ENCODE measurements at regions of chr10 and their contacts with region 1.

Region 1: DNA sequence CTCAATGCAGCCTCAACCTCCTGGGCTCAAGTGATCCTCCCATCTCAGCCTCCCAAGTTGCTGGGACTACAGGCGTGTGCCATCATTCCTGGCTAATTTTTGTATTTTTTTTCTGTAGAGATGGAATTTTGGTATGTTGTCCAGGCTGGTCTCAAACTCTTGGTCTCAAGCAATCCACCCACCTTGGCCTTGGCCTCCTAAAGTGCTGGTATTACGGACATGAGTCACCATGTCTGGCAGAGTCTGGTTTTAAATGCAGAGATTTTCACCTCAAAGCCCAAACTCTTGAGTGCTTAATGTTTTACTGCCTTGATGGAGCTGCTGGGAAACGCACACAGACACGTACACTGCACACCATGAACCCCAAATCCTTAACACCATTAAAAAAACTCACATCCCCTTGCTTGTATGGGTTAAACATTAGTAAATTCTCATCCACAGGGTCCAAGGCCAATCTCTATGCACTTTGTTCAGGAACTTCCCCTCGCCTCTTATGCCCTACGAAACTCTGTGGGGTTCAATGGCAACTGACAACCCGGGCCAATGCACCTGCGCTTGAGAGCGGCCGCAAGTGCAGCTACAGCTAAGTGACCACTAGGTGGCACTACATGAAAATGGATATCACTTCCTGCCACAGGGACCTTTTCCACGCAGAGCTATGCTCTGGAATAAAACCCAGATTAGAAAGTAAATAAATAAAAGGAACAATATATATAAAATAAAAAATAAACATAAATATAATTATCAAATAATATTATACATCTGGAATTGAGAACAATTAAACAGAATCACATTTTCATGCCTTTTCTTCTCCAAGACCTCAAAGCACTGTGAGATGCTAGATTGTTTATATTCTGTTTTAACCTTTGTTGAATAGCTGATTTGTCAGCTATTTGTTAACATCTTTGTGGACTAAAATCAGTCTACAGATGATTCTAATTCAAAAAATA is 66.9 kb upstream of the AFAP1L2 start:
- DNase-seq: peak; percentile 70
- H3K4me3 Mint-ChIP-seq: no peak overlapping the region
- H3K27ac Mint-ChIP-seq: peak overlapping the region; percentile 31
- H3K4me1 Mint-ChIP-seq: peaks cover 27% of the 10 kb centered on the region
- H3K27me3 Mint-ChIP-seq: no peaks in the 10 kb centered on the region

Region 2: DNA sequence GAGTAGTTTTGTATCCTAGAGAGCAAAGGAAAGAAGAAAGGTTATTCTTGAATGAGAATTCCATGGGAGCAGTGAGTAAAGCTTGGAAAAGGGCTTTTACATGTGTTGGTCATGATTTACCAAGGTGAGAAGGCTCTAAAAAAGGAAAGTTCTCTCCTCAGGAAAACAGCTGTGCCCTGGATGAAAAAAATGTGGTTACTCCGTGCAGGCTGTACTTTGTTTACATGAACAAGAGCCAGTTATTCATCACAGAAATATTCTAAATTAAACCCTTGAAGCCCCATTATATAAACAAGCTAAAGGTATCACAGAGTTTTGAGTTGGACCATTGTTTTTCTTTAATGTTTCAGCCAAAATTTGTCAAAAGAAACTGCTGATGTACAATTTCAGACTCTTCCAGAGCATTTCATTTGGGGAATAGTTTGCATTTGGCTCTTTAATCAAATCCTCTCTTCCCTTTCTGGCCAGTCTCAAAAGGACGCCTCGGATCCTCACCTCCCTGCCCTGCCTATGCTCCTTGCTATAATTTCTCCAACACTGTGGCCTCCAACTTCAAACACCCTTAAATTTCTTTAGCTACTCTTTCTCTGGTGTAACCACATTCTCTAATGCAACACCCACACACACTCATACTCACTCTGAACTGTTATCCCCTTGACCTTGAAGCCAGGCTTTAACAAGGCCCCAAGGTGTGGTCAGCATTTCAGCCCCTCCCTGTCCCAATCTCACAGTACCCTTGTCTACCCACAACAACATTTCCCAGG is 114.3 kb before region 1 on chr10:
- CTCF ChIA-PET with region 1: no interaction called
- POLR2A ChIA-PET with region 1: no interaction called
- DNase-seq: no peak
- H3K4me3 Mint-ChIP-seq: no peak overlapping the region
- H3K27ac Mint-ChIP-seq: no peak overlapping the region
- H3K4me1 Mint-ChIP-seq: no peaks in the 10 kb centered on the region
- H3K27me3 Mint-ChIP-seq: peaks cover 22% of the 10 kb centered on the region

Region 3: GRCh38 chr10:114437456-114438292 is 33.6 kb before region 1 on chr10:
- CTCF ChIA-PET with region 1: no interaction called
- POLR2A ChIA-PET with region 1: no interaction called
- DNase-seq: no peak
- H3K4me3 Mint-ChIP-seq: no peak overlapping the region
- H3K27ac Mint-ChIP-seq: no peak overlapping the region
- H3K4me1 Mint-ChIP-seq: no peaks in the 10 kb centered on the region
- H3K27me3 Mint-ChIP-seq: no peaks in the 10 kb centered on the region

Region 4: GRCh38 chr10:114453576-114453975 is 17.7 kb before region 1 on chr10:
- CTCF ChIA-PET with region 1: interaction called, 23 read pairs
- POLR2A ChIA-PET with region 1: no interaction called
- DNase-seq: no peak
- H3K4me3 Mint-ChIP-seq: no peak overlapping the region
- H3K27ac Mint-ChIP-seq: no peak overlapping the region
- H3K4me1 Mint-ChIP-seq: no peaks in the 10 kb centered on the region
- H3K27me3 Mint-ChIP-seq: no peaks in the 10 kb centered on the region

Region 5: DNA sequence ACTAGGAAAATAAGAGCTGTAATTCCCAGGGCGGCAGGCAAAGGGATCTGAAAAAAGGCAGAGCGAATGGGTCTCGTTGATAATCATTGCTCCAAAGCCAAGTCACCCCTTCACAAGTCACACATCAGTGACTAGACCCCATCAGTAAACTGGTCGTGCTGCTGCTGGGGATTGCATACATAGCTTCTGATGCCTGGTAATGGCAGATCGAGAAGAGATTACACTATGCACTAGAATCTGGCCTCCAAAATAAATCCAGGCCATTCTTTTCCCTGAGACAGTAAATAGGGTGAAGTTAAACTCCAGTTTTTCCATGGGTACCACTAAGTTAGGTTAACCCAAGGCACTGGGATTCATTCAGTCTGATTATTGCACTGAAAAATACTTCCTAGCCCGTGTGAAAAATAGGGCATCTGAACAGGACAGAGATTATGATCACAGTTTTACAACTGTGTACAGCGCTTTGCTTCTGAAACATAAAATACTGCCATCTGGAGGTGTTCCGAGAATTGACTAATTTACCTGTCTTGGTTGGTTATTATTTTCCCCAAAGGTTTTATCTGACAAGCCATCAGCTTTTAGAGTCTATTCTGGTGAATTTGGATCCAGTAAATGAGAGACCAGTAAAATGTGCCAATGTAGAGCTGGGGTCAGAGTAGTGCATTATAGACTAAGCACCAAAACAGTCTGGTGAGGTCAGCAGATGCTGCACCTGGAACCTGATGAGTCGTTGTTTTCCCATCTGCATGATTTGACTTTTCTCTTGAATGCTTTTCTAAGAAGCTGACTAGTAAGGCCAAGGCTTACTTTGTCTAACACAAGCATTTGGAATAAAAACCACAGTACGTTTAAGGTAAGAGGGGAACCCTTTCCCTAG is 15.9 kb after region 1 on chr10:
- CTCF ChIA-PET with region 1: interaction called, 48 read pairs
- POLR2A ChIA-PET with region 1: interaction called, 3 read pairs
- DNase-seq: no peak
- H3K4me3 Mint-ChIP-seq: no peak overlapping the region
- H3K27ac Mint-ChIP-seq: peak overlapping the region; percentile 33
- H3K4me1 Mint-ChIP-seq: peaks cover 32% of the 10 kb centered on the region
- H3K27me3 Mint-ChIP-seq: no peaks in the 10 kb centered on the region

Region 6: DNA sequence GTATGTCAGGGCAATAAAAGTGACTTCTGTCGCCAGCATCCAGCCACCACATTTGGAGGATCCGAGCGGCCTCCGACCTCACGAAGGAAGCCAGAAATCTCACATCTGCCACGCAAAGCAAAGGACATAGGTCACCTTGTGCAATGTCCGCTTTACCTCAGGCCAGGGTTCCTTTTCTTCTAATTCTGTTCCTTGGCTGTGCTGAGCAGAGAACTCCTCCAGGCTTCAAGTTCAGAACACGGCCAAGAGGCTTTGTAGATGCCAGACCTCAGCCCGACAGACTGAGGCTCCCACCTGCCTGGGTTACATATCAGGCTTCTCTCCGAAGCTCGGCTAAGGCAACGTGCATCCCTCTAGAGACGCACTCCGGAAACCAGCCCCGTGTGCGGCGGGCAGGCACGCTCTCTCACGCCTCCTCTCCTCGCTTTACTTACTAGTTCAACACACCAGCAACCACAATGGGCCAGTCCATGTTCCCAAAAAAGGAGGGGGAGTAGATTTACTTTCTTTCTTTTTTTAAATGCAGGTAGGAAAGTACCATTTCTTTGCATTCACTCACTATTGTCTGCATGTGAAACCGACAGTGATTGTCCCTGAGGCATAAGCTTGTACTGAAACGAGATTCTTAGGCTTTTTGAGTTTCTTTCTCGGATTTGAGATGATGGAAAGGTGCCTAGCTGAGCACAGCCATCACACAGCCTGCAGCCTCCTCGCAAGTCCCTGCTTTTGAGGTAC is 55.4 kb after region 1 on chr10:
- CTCF ChIA-PET with region 1: interaction called, 43 read pairs
- POLR2A ChIA-PET with region 1: interaction called, 15 read pairs
- DNase-seq: peak; percentile 91
- H3K4me3 Mint-ChIP-seq: peak overlapping the region; percentile 86
- H3K27ac Mint-ChIP-seq: peak overlapping the region; percentile 92
- H3K4me1 Mint-ChIP-seq: peaks cover 52% of the 10 kb centered on the region
- H3K27me3 Mint-ChIP-seq: no peaks in the 10 kb centered on the region

Region 7: GRCh38 chr10:114550756-114551635 is 79.8 kb after region 1 on chr10:
- CTCF ChIA-PET with region 1: interaction called, 76 read pairs
- POLR2A ChIA-PET with region 1: no interaction called
- DNase-seq: no peak
- H3K4me3 Mint-ChIP-seq: no peak overlapping the region
- H3K27ac Mint-ChIP-seq: no peak overlapping the region
- H3K4me1 Mint-ChIP-seq: peaks cover 23% of the 10 kb centered on the region
- H3K27me3 Mint-ChIP-seq: no peaks in the 10 kb centered on the region

Region 8: GRCh38 chr10:114779803-114780609 is 308.8 kb after region 1 on chr10:
- CTCF ChIA-PET with region 1: interaction called, 12 read pairs
- POLR2A ChIA-PET with region 1: no interaction called
- DNase-seq: no peak
- H3K4me3 Mint-ChIP-seq: no peak overlapping the region
- H3K27ac Mint-ChIP-seq: peak overlapping the region; percentile 14
- H3K4me1 Mint-ChIP-seq: peaks cover 17% of the 10 kb centered on the region
- H3K27me3 Mint-ChIP-seq: peaks cover 16% of the 10 kb centered on the region

Measured in activated CD4-positive, alpha-beta memory T cell treated with anti-CD3 and anti-CD28 coated beads, Interleukin-2, amount 10 ng/mL, durations not matched to agents 7 days and 5 days (primary cell).